Natural killer cell (primary cell): ENCODE measurements at regions of chr1 and their contacts with region 1.

Region 1: GRCh38 chr1:160428655-160429054 is 28.3 kb downstream of the VANGL2 start:
- DNase-seq: peak in 1 of 2 donors; percentile 72
- ATAC-seq: peak; percentile 32 to 52 (median 41)
- H3K4me3 ChIP-seq: no peak overlapping the region
- H3K4me3 Mint-ChIP-seq: peak overlapping the region; percentile 64
- H3K27ac ChIP-seq: peak overlapping the region; percentile 92
- H3K27ac Mint-ChIP-seq: peak overlapping the region; percentile 90 to 97
- H3K4me1 ChIP-seq: peaks cover 49% of the 10 kb centered on the region
- H3K4me1 Mint-ChIP-seq: peaks cover 58 to 61% of the 10 kb centered on the region in 2 donors
- H3K27me3 ChIP-seq: no peaks in the 10 kb centered on the region
- H3K27me3 Mint-ChIP-seq: no peaks in the 10 kb centered on the region
- CTCF ChIP-seq: peak; percentile 73

Region 2: DNA sequence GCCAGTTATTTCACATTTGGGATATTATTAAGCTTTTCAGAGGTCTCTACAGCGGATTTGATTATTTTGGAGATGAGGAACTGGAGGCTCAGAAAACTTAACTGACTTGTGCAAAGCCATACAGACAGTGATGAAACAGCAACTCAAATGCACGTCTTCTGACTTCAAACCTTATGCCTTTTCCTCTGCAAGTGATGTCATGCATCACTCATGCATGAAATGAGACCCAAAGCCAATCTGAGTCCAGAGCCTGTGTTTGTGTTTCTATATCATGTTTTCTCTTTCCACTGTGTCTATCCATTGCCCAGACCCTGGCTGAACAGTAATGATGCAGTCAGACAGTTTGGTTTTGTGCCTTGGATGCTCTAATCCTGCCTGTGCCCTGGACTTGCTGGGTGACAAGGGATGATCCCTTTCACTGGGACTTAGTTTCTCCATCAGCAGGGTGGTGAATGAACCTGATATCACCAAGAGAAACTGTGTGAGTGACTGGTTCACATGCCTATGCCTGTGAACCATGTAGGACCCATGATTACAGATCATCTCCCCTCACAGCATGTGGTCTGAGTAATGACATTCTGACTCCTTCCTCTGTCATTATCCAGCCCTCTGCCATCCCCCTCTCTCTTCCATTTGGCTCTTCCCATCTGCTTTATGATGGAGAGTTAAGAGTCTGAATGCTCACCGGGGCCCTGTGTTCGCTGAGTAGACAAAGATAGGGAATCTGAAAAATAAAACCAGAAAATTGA is 61.0 kb after region 1 on chr1:
- intact Hi-C with region 1: loop called (anchors 5 kb)
- DNase-seq: no peak
- ATAC-seq: no peak
- H3K4me3 ChIP-seq: no peak overlapping the region
- H3K4me3 Mint-ChIP-seq: no peak overlapping the region
- H3K27ac ChIP-seq: peak overlapping the region; percentile 75
- H3K27ac Mint-ChIP-seq: peak overlapping the region in 1 of 2 donors; percentile 54
- H3K4me1 ChIP-seq: peaks cover 4% of the 10 kb centered on the region
- H3K4me1 Mint-ChIP-seq: peaks cover 15 to 16% of the 10 kb centered on the region in 2 donors
- H3K27me3 ChIP-seq: no peaks in the 10 kb centered on the region
- H3K27me3 Mint-ChIP-seq: no peaks in the 10 kb centered on the region
- CTCF ChIP-seq: no peak

Region 3: DNA sequence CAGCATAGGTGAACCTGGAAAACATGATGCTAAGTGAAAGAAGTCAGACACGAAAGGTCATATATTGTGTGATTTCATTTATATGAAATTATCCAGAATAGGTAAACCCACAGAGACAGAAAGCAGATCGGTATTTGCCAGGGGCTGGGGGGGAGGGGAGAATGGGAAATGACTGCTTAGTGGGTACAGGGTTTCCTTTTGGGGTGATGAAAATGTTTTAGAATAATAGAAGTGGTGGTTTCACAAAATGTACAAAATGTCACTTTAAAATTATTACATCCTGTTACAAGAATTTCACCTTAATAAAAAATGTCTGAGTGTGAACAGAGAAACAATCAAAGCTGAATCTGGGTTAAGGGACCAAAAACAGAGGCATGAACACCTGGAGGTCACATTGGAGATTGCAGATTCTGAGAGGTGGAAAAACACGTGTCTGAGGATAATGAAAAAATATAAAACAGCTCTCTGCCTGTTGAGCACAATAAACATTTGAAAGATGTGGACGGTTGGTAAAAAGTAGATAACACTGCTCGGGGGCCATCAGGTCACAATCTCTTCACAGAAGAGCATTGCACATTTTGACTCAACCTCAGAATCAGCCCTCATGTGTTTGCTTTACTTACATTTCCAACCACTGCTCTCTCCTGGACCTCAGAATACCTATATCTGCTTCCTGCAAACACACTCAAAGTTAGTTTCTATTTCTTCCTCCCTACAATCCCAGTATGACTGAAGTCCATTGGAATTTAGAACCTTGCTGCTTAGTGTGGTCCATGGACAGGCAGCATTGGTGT is 91.2 kb after region 1 on chr1:
- intact Hi-C with region 1: loop called (anchors 2 kb)
- DNase-seq: peak in 1 of 2 donors; percentile 70
- ATAC-seq: peak; percentile 59 to 73 (median 63)
- H3K4me3 ChIP-seq: peak overlapping the region; percentile 31
- H3K4me3 Mint-ChIP-seq: peak overlapping the region; percentile 93
- H3K27ac ChIP-seq: peak overlapping the region; percentile 90
- H3K27ac Mint-ChIP-seq: peak overlapping the region; percentile 93 to 96
- H3K4me1 ChIP-seq: peaks cover 15% of the 10 kb centered on the region
- H3K4me1 Mint-ChIP-seq: peaks cover 84 to 91% of the 10 kb centered on the region in 2 donors
- H3K27me3 ChIP-seq: no peaks in the 10 kb centered on the region
- H3K27me3 Mint-ChIP-seq: no peaks in the 10 kb centered on the region
- CTCF ChIP-seq: peak; percentile 26

Region 4: GRCh38 chr1:160539990-160540858 is 111.6 kb after region 1 on chr1:
- intact Hi-C with region 1: loop called (anchors 1 kb)
- DNase-seq: peak; percentile 46 to 80
- ATAC-seq: peak; percentile 89 to 96 (median 95)
- H3K4me3 ChIP-seq: no peak overlapping the region
- H3K4me3 Mint-ChIP-seq: peak overlapping the region; percentile 78
- H3K27ac ChIP-seq: peak overlapping the region; percentile 70
- H3K27ac Mint-ChIP-seq: peak overlapping the region; percentile 93 to 95
- H3K4me1 ChIP-seq: peaks cover 41% of the 10 kb centered on the region
- H3K4me1 Mint-ChIP-seq: peaks cover 57 to 58% of the 10 kb centered on the region in 2 donors
- H3K27me3 ChIP-seq: no peaks in the 10 kb centered on the region
- H3K27me3 Mint-ChIP-seq: no peaks in the 10 kb centered on the region
- CTCF ChIP-seq: no peak